Endothelial cell of umbilical vein (primary cell): ENCODE measurements at regions of chr3 and their contacts with region 1.

Region 1: DNA sequence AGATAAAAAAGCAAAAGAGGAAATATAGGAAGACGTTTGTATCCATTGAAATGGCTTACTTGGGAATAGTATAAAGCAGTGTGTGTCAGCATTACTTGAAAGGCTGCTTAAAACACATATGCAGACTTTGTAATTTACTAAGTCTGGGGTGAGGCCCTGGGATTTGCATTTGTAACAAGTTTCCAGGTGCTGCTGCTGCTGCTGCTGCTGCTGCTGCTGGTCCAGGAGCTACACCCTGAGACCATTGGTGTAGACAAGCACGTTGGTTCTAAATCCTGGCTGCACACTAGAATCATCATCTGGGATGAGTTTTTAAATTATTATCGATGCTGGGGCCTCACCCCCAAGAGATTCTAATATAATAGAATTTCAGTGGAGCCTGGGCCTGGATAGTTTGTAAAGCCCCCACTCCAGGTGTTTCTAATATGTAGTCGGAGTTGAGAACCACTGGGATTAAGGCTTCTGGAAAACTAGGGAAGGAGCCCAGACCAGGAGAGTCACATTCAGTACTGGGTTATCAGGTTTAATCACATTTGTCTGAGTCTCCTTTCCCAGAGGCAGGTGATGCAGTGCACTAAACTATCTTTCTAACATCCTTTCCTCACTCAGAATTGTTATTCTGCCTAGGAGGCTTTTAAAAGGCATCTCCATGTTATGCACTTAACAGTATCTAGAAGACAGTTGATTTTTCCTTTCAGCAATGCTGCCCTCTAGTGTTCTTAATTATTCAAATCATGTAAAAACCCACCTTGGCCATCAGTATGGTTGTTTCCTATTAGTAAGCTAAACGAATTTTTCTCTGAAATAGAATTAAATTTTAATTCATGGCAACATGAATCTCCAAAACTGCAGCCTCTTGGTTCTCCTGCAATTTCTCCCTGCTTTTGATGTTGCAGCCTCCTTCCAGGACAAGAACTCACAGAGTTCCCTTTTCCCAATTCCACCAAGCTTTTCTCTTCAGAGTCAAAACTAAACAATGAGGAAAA is 45.4 kb downstream of the SSR3 start:
- DNase-seq: peak; percentile 80
- H3K4me3 ChIP-seq: no peak overlapping the region
- H3K27ac ChIP-seq: no peak overlapping the region
- H3K4me1 ChIP-seq: peaks cover 3% of the 10 kb centered on the region
- H3K27me3 ChIP-seq: no peaks in the 10 kb centered on the region
- CTCF ChIP-seq: peak; percentile 32 to 35
- POLR2A ChIP-seq: no peak

Region 2: GRCh38 chr3:156151824-156152428 is 357.6 kb before region 1 on chr3:
- CTCF ChIA-PET with region 1: interaction called, 187 read pairs
- POLR2A ChIA-PET with region 1: no interaction called
- dilution Hi-C with region 1: loop called (anchors 25 kb)
- intact Hi-C with region 1: loop called (anchors 1 kb)
- DNase-seq: peak; percentile 75
- H3K4me3 ChIP-seq: no peak overlapping the region
- H3K27ac ChIP-seq: no peak overlapping the region
- H3K4me1 ChIP-seq: peaks cover 19% of the 10 kb centered on the region
- H3K27me3 ChIP-seq: peaks cover 0 to 1% of the 10 kb centered on the region in 2 experiments
- CTCF ChIP-seq: peak; percentile 77 to 81
- POLR2A ChIP-seq: no peak

Region 3: GRCh38 chr3:156382458-156383346 is 126.8 kb before region 1 on chr3:
- CTCF ChIA-PET with region 1: interaction called, 62 read pairs
- POLR2A ChIA-PET with region 1: no interaction called
- dilution Hi-C with region 1: no loop called
- intact Hi-C with region 1: loop called (anchors 1 kb)
- DNase-seq: peak; percentile 49
- H3K4me3 ChIP-seq: no peak overlapping the region
- H3K27ac ChIP-seq: no peak overlapping the region
- H3K4me1 ChIP-seq: no peaks in the 10 kb centered on the region
- H3K27me3 ChIP-seq: no peaks in the 10 kb centered on the region
- CTCF ChIP-seq: peak; percentile 76 to 84
- POLR2A ChIP-seq: no peak

Region 4: DNA sequence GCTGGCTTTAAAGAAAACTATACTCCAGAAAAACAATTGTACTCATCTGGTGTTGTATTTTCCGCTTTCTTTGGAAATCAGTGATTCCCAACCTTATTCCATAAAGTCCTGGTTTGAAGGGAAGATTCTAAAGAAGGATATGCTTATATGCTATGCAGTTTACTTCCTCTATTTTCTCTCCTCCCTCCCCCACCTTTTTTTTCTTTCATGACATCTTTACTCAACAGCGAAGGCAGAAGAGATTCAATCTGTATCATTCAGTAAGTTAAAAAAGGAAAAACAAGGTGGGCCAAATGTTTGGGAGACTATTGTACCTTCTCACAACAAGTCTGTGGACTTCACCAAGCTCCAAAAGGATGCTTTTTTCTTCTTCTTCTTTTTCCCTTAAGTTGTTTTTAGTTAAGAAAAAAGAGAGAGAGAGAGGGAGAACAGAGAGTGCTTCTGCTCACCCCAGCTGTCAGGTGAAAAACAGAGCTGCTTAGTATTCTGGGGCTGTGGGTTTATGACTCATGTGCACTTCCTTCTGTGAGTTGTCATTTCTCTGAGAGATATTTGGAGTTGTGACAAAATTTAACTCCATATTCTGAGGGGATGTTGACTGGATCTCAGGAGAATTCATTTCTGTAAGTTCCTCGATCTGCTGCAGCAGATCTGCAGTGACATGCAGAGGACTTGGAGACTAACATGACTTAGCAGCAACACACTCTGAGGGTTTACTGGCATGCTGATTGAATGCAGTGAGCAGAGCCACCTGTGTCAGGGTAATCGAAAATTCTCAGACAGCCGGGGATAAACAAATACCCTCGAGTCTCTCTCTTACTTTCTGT is 25.3 kb before region 1 on chr3:
- CTCF ChIA-PET with region 1: interaction called, 15 read pairs
- POLR2A ChIA-PET with region 1: no interaction called
- dilution Hi-C with region 1: no loop called
- intact Hi-C with region 1: no loop called
- DNase-seq: peak; percentile 82
- H3K4me3 ChIP-seq: peak overlapping the region in 1 of 3 experiments; percentile 16
- H3K27ac ChIP-seq: peak overlapping the region; percentile 28
- H3K4me1 ChIP-seq: peaks cover 33% of the 10 kb centered on the region
- H3K27me3 ChIP-seq: no peaks in the 10 kb centered on the region
- CTCF ChIP-seq: no peak
- POLR2A ChIP-seq: no peak

Region 5: GRCh38 chr3:156525808-156526207 is 16.3 kb after region 1 on chr3:
- CTCF ChIA-PET with region 1: interaction called, 24 read pairs
- POLR2A ChIA-PET with region 1: no interaction called
- dilution Hi-C with region 1: no loop called
- intact Hi-C with region 1: no loop called
- DNase-seq: no peak
- H3K4me3 ChIP-seq: no peak overlapping the region
- H3K27ac ChIP-seq: no peak overlapping the region
- H3K4me1 ChIP-seq: no peaks in the 10 kb centered on the region
- H3K27me3 ChIP-seq: peaks cover 0 to 3% of the 10 kb centered on the region in 2 experiments
- CTCF ChIP-seq: no peak
- POLR2A ChIP-seq: no peak

Region 6: DNA sequence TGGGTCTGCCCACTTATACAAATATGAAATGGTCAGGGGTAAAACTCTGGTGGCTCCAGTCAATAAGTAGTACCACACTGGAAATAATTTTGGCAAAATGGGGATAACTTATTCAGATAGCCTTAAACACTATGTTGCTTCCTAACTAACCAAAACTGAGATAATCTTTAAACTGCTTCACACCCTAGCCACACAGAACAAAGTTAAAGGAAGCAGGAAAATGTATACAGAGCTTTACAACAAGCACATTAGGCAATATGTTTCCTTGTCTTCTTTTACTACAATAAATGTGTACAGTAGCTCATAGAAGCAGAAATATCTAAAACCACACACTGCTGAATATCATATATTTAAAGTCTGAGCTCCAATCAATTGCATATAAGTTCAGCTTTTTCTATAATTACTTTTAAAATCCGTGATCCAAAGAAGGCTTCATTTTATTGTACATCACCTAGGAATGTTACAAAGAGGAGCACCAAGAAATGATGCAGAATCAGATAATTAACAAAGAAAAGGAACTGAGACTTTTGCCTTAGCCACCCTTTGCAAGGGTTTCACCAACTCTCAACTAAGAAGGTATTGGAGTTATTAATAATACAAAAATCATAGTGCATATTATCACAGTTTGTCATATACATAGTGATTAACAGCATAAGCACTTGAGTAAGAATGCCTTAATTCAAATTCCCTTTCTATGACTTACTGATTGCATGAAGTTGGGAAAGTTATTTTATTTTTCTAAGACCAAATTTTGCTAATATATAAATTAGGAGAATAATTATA is 54.6 kb after region 1 on chr3:
- CTCF ChIA-PET with region 1: no interaction called
- POLR2A ChIA-PET with region 1: no interaction called
- dilution Hi-C with region 1: no loop called
- intact Hi-C with region 1: no loop called
- DNase-seq: no peak
- H3K4me3 ChIP-seq: no peak overlapping the region
- H3K27ac ChIP-seq: no peak overlapping the region
- H3K4me1 ChIP-seq: no peaks in the 10 kb centered on the region
- H3K27me3 ChIP-seq: peaks cover 8 to 9% of the 10 kb centered on the region in 2 experiments
- CTCF ChIP-seq: no peak
- POLR2A ChIP-seq: no peak

Region 7: GRCh38 chr3:156787926-156788663 is 278.6 kb after region 1 on chr3:
- CTCF ChIA-PET with region 1: no interaction called
- POLR2A ChIA-PET with region 1: no interaction called
- dilution Hi-C with region 1: no loop called
- intact Hi-C with region 1: no loop called
- DNase-seq: peak; percentile 43
- H3K4me3 ChIP-seq: no peak overlapping the region
- H3K27ac ChIP-seq: peak overlapping the region; percentile 61
- H3K4me1 ChIP-seq: peaks cover 40% of the 10 kb centered on the region
- H3K27me3 ChIP-seq: no peaks in the 10 kb centered on the region
- CTCF ChIP-seq: no peak
- POLR2A ChIP-seq: no peak

Region 8: DNA sequence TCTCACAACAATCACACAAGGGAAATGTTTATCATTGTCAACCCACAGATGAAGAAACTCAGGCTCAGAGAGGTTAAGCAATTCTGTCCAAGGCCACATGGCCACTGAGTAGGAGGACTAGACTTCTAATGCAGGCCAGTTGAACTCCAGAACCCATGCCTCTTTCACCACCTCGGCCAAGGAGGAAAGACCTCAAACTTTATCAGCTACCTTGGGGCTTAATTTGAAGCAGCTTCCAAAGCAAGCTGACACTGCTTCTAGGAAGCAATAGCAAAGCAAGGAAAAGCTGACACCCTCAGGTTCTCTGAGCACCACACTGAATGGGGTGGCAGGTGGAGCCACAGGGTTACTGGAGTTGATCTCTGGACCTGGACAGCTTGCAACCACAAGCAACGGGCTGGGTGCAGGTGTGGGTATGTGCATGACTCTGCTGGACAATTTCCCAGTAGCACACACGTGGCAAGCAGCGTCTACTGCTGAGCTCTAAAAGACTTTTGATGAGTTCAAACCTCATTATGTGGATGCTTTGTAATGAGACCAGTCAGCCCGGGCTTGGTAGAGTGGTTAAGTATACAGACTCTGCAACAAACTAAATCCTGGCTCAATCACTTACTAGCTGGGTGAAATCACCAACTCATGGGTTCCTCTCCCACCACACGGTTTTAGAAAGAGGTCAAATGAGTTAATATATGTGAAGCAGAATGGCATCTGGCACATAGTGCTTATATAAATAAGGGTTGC is 627.3 kb after region 1 on chr3:
- CTCF ChIA-PET with region 1: interaction called, 13 read pairs
- POLR2A ChIA-PET with region 1: no interaction called
- dilution Hi-C with region 1: no loop called
- intact Hi-C with region 1: no loop called
- DNase-seq: no peak
- H3K4me3 ChIP-seq: no peak overlapping the region
- H3K27ac ChIP-seq: no peak overlapping the region
- H3K4me1 ChIP-seq: peaks cover 6% of the 10 kb centered on the region
- H3K27me3 ChIP-seq: no peaks in the 10 kb centered on the region
- CTCF ChIP-seq: no peak
- POLR2A ChIP-seq: no peak